Dorsolateral prefrontal cortex (tissue), 120 donors: ENCODE measurements at regions of chr5 and their contacts with region 1.

Region 1: GRCh38 chr5:45774528-45774927 is 78.3 kb upstream of the HCN1 start:
- DNase-seq: no peak
- H3K4me3 ChIP-seq: no peak overlapping the region
- H3K27ac ChIP-seq: no peak overlapping the region
- H3K27me3 ChIP-seq: no peaks in the 10 kb centered on the region
- CTCF ChIP-seq: peak in 54 of 56 donors; percentile 29 to 68 (median 50)

Region 2: DNA sequence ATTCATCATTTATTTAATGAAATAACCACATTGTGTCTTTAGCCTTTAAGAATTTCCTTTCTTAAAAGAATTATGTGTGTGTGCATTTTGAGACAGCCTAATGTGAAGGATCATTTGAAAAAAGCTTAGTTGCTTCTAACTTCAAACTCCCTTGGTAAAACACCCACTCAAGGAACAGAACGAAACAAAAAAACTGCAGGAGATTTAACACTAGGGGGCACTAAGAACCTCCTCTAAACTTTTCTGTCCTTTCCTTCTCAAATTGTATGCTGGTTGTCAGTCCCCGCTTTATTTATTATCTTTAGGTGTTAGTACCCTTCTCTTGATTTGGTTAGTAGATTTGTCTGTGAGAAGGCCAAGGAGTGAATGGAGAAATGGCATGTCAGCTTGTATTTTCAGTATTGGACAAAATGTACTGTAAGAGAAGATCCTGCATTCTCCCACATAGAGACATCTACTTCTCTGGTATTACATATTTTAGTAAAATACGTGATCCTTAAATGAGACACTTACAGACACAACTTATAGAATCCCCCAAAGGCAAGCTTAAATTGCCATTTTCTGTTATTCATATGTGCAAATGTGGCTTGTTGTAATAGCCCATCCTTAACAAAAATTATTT is 736.1 kb before region 1 on chr5:
- intact Hi-C with region 1: loop called in 1 of 2 experiments (anchors 5 kb)
- DNase-seq: peak in 1 of 10 donors; percentile 4
- H3K4me3 ChIP-seq: peak overlapping the region in 10 of 59 donors; percentile 5 to 45 (median 14)
- H3K27ac ChIP-seq: no peak overlapping the region
- H3K27me3 ChIP-seq: no peaks in the 10 kb centered on the region
- CTCF ChIP-seq: peak; percentile 46 to 79 (median 66)

Region 3: GRCh38 chr5:45862763-45863162 is 88.2 kb after region 1 on chr5:
- intact Hi-C with region 1: no loop called
- DNase-seq: no peak
- H3K4me3 ChIP-seq: no peak overlapping the region
- H3K27ac ChIP-seq: no peak overlapping the region
- H3K27me3 ChIP-seq: no peaks in the 10 kb centered on the region
- CTCF ChIP-seq: no peak